Ovary (tissue), 10 donors: ENCODE measurements at regions of chr3 and their contacts with region 1.

Region 1: DNA sequence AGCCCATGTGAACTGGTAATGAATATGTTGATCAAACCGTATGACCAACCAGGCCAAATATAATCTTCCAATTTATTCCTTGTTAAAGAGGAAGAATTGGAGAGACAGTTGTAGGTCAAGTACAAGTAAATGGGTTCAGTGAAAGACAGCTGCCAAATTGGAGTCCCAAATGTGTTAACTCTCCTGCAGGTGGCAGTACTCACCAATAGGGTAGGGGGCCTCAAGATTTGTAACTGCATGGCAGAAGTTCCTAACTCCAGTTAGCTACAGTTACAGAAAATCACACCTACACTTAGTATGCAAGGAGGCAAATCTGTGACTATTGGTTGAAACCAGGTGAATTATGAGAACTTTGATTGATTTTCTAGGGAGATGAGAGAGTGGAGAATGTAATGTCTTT is 278.0 kb downstream of the ZBBX start:
- DNase-seq: no peak
- H3K4me3 ChIP-seq: no peak overlapping the region
- H3K27ac ChIP-seq: no peak overlapping the region
- H3K4me1 ChIP-seq: no peaks in the 10 kb centered on the region
- H3K27me3 ChIP-seq: no peaks in the 10 kb centered on the region
- CTCF ChIP-seq: no peak
- EP300 ChIP-seq: no peak
- POLR2A ChIP-seq: no peak

Region 2: GRCh38 chr3:166955540-166955939 is 146.5 kb before region 1 on chr3:
- intact Hi-C with region 1: no loop called
- DNase-seq: no peak
- H3K4me3 ChIP-seq: no peak overlapping the region
- H3K27ac ChIP-seq: no peak overlapping the region
- H3K4me1 ChIP-seq: no peaks in the 10 kb centered on the region
- H3K27me3 ChIP-seq: no peaks in the 10 kb centered on the region
- CTCF ChIP-seq: no peak
- EP300 ChIP-seq: no peak
- POLR2A ChIP-seq: no peak

Region 3: GRCh38 chr3:167012687-167013086 is 89.4 kb before region 1 on chr3:
- intact Hi-C with region 1: no loop called
- DNase-seq: no peak
- H3K4me3 ChIP-seq: no peak overlapping the region
- H3K27ac ChIP-seq: no peak overlapping the region
- H3K4me1 ChIP-seq: no peaks in the 10 kb centered on the region
- H3K27me3 ChIP-seq: no peaks in the 10 kb centered on the region
- CTCF ChIP-seq: no peak
- EP300 ChIP-seq: no peak
- POLR2A ChIP-seq: no peak

Region 4: GRCh38 chr3:167251678-167252077 is 149.6 kb after region 1 on chr3:
- intact Hi-C with region 1: loop called in 1 of 4 experiments (anchors 5 kb)
- DNase-seq: no peak
- H3K4me3 ChIP-seq: no peak overlapping the region
- H3K27ac ChIP-seq: no peak overlapping the region
- H3K4me1 ChIP-seq: no peaks in the 10 kb centered on the region
- H3K27me3 ChIP-seq: no peaks in the 10 kb centered on the region
- CTCF ChIP-seq: no peak
- EP300 ChIP-seq: no peak
- POLR2A ChIP-seq: no peak

Region 5: DNA sequence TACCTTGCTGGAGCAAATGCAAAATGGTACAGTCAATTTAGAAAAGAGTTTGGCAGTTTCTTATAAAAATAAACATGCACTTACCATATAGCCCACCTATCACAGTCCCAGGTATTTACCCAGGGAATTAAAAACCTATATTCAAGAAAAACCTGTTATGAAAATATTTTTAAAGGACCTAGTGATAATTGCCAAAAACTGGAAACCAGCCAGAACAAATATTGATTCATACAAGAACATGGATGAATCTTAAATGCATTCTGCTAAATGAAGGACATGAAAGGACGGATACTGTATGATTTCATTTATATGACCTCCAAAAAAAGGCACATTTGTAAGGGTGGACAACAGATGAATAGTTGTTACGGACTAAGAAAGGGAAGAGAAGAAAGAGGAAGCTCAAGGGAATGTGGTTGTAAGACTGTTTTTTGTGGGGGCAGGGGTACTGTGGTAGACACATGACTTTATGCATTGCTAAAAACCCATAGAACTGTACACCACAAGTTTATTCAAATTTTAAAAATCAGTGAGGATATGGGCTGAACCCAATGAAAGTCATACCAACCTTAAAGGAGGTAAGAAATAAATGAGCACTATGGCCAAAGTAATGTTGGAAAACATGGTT is 217.0 kb after region 1 on chr3:
- intact Hi-C with region 1: no loop called
- DNase-seq: no peak
- H3K4me3 ChIP-seq: no peak overlapping the region
- H3K27ac ChIP-seq: no peak overlapping the region
- H3K4me1 ChIP-seq: no peaks in the 10 kb centered on the region
- H3K27me3 ChIP-seq: no peaks in the 10 kb centered on the region
- CTCF ChIP-seq: no peak
- EP300 ChIP-seq: no peak
- POLR2A ChIP-seq: no peak